ENCODE measurements at regions of chr7 and their contacts with region 1.

Region 1: GRCh38 chr7:11343818-11344413 is 370.2 kb downstream of the PHF14 start:
- DNase-seq: no peak
- H3K4me3 Mint-ChIP-seq: no peak overlapping the region
- H3K27ac Mint-ChIP-seq: no peak overlapping the region
- H3K4me1 Mint-ChIP-seq: peaks cover 4% of the 10 kb centered on the region
- H3K27me3 Mint-ChIP-seq: peaks cover 10% of the 10 kb centered on the region

Region 2: DNA sequence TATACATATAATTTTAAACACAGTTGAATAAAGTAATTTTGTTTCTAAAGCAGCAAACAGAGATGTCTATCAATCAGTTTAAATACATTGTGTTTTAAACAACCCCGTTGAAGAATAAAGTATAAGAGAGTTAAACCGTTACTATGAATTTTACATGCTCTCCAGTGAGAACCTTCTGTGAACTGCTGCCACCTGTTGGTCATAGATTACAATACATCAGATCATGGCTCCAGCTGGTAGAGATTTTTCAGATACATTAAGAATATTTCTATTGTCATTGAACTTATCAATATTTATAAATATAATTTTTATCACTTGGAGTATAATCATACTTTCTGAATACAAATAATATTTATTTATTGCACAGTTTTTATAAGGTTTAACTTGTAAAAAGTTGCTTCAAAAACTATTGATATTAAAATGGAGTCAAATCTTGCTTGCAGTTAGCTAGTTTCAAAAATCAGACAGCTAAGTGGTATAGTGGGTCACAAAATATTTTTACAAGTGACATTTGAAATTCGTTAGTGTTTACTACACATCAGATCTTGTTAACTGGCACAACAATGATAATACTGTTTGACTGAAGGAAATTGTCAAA is 931.4 kb before region 1 on chr7:
- CTCF ChIA-PET with region 1: no interaction called
- intact Hi-C with region 1: loop called (anchors 2 kb)
- DNase-seq: peak; percentile 29
- H3K4me3 Mint-ChIP-seq: no peak overlapping the region
- H3K27ac Mint-ChIP-seq: no peak overlapping the region
- H3K4me1 Mint-ChIP-seq: no peaks in the 10 kb centered on the region
- H3K27me3 Mint-ChIP-seq: no peaks in the 10 kb centered on the region

Region 3: DNA sequence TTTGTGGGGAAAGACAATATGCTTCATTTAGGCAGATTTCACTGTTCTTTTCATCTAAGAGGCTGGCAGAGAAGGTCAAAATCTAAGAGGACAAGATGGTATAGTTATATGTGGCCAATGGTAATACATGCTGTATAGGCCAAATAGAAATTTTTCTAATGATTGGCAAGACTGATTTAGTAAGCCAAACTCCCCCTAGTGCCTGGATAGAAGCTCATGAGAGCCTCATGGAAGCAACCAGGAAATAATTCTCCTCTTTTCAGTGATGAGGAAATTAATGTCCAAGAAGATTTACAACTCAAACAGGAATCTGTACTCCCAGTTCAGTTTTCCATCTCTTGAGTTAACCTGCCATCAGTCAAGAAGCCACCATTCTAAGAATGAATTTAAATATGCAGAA is 623.9 kb before region 1 on chr7:
- CTCF ChIA-PET with region 1: no interaction called
- intact Hi-C with region 1: no loop called
- DNase-seq: no peak
- H3K4me3 Mint-ChIP-seq: no peak overlapping the region
- H3K27ac Mint-ChIP-seq: no peak overlapping the region
- H3K4me1 Mint-ChIP-seq: no peaks in the 10 kb centered on the region
- H3K27me3 Mint-ChIP-seq: peaks cover 3% of the 10 kb centered on the region

Region 4: DNA sequence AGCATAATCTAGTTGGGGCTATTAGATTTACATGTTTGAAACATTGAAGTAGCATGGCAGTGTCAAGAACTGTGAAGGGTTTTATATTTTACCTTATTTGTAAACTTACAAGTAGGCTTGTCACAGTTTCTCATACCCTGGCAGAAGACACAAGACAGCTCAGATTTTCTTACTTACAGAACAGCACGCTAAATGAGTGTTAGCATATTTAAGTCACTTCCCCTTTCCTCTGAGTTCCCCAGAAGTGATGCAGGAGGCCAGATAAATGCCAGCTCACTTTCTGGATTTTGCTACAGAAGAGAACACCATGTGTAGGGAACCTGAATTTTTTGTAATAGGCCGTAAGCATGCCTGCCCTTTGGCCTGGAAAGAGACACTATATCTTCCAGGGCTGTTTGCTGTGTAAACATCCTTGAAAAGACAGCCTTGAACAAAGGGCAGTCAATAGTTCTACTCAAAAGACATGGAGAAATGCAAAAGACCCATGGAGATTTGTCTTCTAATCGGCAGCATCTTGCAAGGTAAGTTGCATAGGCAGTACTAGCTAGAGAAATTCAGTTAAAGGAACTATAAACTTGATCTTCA is 91.1 kb before region 1 on chr7:
- CTCF ChIA-PET with region 1: no interaction called
- intact Hi-C with region 1: loop called (anchors 5 kb)
- DNase-seq: no peak
- H3K4me3 Mint-ChIP-seq: no peak overlapping the region
- H3K27ac Mint-ChIP-seq: no peak overlapping the region
- H3K4me1 Mint-ChIP-seq: no peaks in the 10 kb centered on the region
- H3K27me3 Mint-ChIP-seq: peaks cover 3% of the 10 kb centered on the region

Measured in activated naive CD4-positive, alpha-beta T cell treated with anti-CD3 and anti-CD28 coated beads for 36 hours (primary cell).